ENCODE measurements at regions of chr11 and their contacts with region 1.

Region 1: DNA sequence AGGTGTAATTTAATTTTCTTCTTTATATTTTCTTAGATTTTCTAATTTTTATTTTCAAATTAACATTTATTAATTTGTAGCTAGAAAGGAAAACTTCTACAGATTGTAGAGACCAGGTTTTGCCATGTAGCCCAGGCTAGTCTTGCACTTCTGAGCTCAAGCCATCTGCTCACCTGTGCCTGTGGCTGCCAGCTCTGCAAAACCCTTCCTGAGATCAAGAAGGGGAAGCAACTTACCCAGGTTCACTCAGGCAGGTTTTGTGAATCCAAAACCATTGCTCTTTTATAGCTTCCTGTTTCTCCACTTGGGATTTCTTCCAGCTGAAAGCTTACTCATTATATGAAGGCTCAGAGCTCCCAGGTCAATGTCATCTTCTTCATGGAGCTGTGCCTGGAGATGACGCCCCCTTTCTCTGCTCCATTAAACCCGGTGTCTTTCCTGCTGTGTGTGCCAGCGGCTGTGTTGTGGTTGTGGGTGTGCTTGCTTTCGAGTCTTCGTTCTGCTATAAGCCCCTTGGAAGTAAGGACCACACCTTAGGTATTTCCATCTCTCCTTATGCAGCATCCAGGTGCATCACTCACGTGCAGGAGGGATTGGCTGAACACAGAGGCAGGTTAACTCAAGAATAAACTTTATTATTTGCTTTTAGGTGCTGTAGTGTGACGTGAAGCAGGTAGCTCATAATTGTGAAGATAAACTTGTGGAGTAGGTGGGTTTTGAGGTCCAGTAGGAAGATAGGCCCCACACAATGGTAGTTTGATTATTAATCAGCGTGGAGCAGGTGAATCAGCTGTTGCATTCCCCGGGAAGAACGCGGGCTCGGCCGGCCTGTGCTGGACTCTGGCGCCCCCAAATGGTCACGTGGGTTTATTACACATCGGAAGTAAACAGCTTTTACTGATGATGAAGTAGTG is 42.2 kb upstream of the INCENP start:
- DNase-seq: peak; percentile 87
- ATAC-seq: peak; percentile 87

Region 2: DNA sequence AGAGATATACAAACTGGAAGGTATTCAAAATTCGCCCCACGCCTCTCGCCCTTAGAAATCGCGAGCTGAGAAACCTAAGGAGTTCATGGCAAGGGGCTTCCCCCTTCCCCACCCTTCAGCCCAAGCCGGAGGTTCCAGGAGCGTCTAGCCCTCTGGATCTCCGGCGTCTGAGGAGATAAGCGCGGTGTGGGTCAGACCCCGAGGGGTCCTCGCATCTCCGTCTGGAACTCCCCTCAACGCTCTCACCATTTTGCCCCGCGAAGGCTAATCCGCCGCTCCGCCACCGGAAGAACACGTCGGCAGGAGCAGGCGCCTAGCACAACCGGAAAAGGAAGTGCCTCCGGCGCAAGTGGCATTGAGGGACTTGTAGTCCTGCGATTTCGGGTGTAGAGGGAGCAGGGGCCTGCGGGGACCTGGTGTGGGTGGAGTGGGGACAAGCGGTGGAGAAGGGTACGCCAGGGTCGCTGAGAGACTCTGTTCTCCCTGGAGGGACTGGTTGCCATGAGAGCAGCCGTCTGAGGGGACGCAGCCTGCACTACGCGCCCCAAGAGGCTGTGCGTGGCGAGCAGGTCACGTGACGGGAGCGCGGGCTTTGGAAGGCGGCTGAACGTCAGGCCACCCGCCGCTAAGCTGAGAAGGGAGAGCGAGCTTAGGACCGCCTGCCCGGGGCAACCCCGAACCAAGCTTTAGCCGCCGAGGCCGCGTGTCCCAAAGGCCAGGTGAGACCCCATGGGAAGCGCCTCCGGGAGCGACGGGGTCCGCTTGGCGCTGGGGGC is 289.1 kb before region 1 on chr11 and contains the starts of genes FEN1 and TMEM258:
- intact Hi-C with region 1: loop called (anchors 10 kb)
- DNase-seq: peak; percentile 93
- ATAC-seq: peak; percentile 95
- total RNA-seq, gene FEN1: 6.3 TPM
- total RNA-seq, gene TMEM258: 123 TPM

Region 3: DNA sequence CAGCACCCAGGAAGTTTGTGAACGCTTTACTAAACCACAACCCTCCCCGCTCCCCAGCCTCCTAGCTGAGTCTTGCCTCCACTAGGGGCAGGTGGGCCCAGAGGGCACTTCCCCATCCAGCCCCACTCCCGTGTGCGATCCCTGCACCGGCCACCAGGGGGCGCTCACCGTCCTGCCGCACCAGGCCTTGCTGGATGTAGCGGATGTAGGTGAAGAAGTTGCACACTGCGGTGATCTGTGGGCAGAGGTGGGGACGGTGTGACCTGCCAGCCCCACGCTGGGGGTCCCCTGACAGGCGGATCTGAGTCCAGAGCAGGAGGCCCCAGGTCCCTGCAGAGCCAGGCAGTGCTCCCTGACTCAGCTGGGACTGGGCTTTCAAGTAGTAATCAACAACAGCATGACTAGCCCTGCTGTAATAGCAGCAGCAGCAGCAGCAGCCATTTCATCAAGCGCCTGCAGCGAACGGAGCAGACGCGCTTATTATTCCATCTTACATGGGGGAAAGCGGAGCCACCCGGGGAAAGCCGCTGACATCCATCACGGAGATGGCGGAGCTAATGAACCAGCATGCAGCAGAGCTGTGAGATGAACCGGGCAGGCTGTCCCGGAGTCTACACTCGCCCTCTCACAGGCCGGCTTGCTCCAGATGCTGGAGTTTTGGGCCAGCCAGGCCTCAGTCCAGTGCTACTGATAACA is 182.3 kb before region 1 on chr11:
- intact Hi-C with region 1: loop called (anchors 2 kb)
- DNase-seq: peak; percentile 91
- ATAC-seq: peak; percentile 84

Region 4: DNA sequence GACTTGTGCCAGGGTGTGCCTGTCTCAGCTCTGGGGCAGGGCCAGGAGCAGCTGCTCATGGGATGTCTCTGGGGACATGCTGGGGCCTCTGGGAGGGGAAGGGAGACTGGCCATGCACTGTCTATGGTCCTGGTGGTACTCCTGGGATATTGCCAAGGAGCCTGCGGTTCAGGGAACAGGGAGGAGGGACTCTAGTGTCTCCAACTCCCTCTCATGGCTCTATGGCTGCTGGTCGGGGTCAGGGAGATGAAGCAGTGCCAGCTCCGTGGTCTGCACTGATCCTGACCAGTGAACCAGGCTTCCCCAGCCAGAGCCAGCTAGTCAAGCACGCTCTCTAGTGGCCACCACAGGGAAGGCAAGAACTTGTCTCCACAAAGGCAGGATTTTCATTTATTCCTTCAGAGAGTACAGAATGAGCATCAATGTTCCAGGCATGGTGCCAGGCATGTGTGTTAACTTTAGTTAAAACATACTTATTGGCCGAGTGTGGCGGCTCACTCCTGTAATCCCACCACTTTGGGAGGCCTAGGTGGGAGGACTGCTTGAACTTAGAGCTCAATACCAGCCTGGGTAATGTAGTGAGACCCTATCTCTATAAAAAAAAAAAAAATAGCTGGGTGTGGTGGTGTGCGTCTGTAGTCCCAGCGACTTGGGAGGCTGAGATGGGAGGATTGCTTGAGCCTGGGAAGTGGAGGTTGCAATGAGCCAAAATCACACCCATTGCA is 134.0 kb before region 1 on chr11:
- intact Hi-C with region 1: loop called (anchors 5 kb)
- DNase-seq: peak; percentile 91
- ATAC-seq: peak; percentile 86

Region 5: GRCh38 chr11:62179995-62180394 is 98.4 kb after region 1 on chr11:
- intact Hi-C with region 1: no loop called
- DNase-seq: no peak
- ATAC-seq: no peak

Region 6: DNA sequence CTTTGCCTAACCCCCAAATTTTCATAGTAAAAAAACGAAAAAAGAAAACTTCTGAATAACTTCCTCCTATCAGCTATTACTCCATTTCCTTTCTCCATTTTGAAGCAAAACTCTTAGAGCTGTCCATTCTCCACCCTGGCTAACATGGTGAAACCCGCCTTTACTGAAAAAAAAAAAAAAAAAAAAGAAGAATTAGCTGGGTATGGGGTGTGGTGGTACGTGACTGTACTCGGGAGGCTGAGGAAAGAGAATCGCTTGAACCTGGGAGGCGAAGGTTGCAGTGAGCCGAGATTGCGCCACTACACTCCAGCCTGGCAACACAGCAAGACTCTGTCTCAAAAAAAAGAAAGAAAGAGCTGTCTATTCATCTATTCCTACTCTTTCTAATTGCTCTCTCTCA is 734.9 kb after region 1 on chr11:
- intact Hi-C with region 1: no loop called
- DNase-seq: no peak
- ATAC-seq: no peak

Measured in Right ventricle myocardium superior (tissue), 1 donor.